Heart right ventricle (tissue), 16 donors: ENCODE measurements at regions of chr10 and their contacts with region 1.

Region 1: DNA sequence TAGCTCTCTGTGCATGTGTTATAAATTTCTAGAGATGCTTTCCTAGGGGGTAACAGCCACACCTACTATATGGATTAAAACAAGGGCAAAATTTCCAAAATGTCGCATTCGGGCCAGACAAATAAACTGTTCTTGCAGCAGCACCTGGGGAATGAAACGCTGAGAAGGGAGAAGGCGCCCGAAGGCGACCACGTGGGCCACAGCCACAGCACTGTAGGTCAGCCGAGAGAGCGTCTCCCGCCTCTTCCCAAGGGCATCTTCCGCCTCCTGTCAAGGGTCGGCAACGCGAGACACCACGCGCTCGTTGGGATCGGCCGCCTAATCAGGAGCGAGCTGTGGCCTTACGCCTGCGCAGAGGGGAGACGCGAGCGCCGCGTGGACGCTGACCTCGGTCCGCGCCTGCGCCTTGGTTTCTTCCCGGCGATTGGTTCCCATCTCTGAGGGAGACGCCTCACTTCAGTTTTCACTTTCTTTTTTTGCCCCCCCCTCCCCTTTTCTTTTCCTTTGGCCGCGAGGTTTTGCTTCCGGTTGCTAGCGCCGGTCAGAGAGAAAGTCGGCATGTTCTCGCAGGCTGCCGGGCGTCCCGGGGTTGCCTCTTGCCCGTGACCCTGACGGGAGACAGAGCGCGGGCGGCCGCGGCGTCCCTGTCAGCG is at the start of gene TASOR2:
- DNase-seq: peak; percentile 98 to 99
- ATAC-seq: peak; percentile 97 to 99 (median 98)
- H3K4me3 ChIP-seq: peak within 1 kb of the TSS; percentile 83 to 98 (median 93)
- H3K27ac ChIP-seq: peak within 1 kb of the TSS; percentile 82 to 97 (median 92)
- H3K4me1 ChIP-seq: peaks cover 9 to 32% (median 26%) of the 10 kb centered on the region in 9 donors
- H3K27me3 ChIP-seq: no peaks in the 10 kb centered on the region
- CTCF ChIP-seq: no peak
- total RNA-seq, gene TASOR2: 26.9 to 45.6 (median 34.6) TPM

Region 2: DNA sequence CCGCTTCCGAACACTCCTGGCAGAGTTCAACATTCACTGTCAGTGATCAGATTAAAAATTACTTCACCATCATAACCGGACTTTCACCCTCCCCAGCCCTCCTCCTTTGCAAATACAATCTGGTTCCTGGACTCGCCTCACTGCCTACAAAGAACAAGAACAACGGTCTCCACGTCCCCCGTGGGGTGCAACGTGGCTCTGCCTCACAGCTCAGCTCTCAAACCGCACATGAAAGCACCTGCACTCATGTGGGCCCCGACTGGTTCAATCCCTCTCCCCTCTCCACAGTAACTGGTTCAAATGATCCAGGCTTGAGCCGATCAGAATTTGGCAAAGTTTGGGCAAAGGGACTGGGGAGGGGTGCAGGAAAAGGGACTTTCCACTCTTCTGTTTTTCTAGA is 39.1 kb before region 1 on chr10:
- intact Hi-C with region 1: loop called in 1 of 10 experiments (anchors 5 kb)
- DNase-seq: peak in 1 of 2 donors; percentile 54
- ATAC-seq: peak; percentile 35 to 79 (median 60)
- H3K4me3 ChIP-seq: no peak overlapping the region
- H3K27ac ChIP-seq: peak overlapping the region; percentile 62 to 87 (median 79)
- H3K4me1 ChIP-seq: peaks cover 15 to 51% (median 33%) of the 10 kb centered on the region in 9 donors
- H3K27me3 ChIP-seq: no peaks in the 10 kb centered on the region
- CTCF ChIP-seq: no peak